ENCODE measurements at regions of chr10 and their contacts with region 1.

Region 1: GRCh38 chr10:119517235-119518141 is 25.0 kb downstream of the RGS10 start:
- DNase-seq: peak; percentile 83
- H3K4me3 Mint-ChIP-seq: peak overlapping the region; percentile 43
- H3K27ac Mint-ChIP-seq: peak overlapping the region; percentile 90
- H3K4me1 Mint-ChIP-seq: peaks cover 70% of the 10 kb centered on the region
- H3K27me3 Mint-ChIP-seq: no peaks in the 10 kb centered on the region

Region 2: DNA sequence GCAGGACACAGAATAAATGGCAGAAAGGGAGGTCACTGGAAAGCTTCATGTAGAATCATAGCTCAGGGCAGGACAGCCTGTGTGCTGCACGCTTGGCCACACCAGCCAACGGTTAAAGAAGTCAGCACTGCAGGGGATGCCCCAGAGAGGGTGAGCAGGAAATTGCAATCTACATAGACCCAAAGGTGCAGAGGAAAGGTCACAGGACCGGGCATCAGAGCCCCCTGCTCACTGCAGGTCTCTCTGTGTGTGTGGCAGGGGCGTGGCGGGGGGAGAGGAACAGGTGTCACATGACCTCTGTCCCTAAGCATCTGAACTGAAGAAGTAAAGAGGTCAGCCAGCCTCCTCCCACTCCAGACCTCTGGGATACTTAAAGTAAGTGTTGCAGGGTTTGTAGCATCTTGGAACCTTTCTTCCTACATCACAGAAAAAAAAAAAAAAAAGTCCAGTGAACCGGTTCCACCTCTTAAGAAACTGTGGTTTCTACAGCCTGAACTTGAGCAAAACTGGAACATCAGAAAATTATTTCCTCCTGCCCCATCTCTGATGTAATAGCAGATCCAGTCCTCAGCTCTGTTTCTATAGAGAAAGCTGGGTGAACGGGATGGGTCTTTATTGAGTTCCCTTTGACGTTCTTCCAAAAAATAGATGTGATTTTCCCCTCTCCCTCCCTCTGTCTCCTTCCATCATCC is 39.2 kb before region 1 on chr10:
- CTCF ChIA-PET with region 1: interaction called, 13 read pairs
- intact Hi-C with region 1: loop called (anchors 1 kb)
- DNase-seq: peak; percentile 76
- H3K4me3 Mint-ChIP-seq: peak overlapping the region; percentile 37
- H3K27ac Mint-ChIP-seq: peak overlapping the region; percentile 14
- H3K4me1 Mint-ChIP-seq: peaks cover 29% of the 10 kb centered on the region
- H3K27me3 Mint-ChIP-seq: no peaks in the 10 kb centered on the region

Region 3: GRCh38 chr10:119496273-119496672 is 21.2 kb before region 1 on chr10:
- CTCF ChIA-PET with region 1: interaction called, 10 read pairs
- intact Hi-C with region 1: no loop called
- DNase-seq: peak; percentile 79
- H3K4me3 Mint-ChIP-seq: no peak overlapping the region
- H3K27ac Mint-ChIP-seq: peak overlapping the region; percentile 62
- H3K4me1 Mint-ChIP-seq: peaks cover 85% of the 10 kb centered on the region
- H3K27me3 Mint-ChIP-seq: no peaks in the 10 kb centered on the region

Region 4: GRCh38 chr10:119502209-119502608 is 15.3 kb before region 1 on chr10:
- CTCF ChIA-PET with region 1: interaction called, 10 read pairs
- intact Hi-C with region 1: loop called (anchors 1 kb)
- DNase-seq: peak; percentile 93
- H3K4me3 Mint-ChIP-seq: peak overlapping the region; percentile 47
- H3K27ac Mint-ChIP-seq: peak overlapping the region; percentile 99
- H3K4me1 Mint-ChIP-seq: peaks cover 98% of the 10 kb centered on the region
- H3K27me3 Mint-ChIP-seq: no peaks in the 10 kb centered on the region

Region 5: DNA sequence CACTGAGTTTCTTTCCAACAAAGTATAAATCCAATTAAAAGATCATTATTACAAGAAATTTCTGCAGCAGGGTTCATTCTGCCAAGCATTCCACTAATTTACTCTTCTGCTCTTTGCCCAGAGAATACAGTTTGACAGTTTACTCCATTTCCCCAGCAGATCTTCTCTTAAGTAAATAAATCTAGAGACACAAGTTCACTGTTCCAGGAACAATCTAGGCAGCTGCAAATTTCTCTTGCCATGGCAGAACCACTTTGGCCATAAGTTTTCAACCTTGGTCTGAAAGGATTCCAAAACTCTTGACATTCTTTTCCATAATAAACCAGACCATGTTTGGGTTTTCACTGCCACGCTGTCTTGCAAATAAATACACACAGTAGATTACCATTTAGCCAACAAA is 13.6 kb after region 1 on chr10:
- CTCF ChIA-PET with region 1: interaction called, 18 read pairs
- intact Hi-C with region 1: no loop called
- DNase-seq: no peak
- H3K4me3 Mint-ChIP-seq: no peak overlapping the region
- H3K27ac Mint-ChIP-seq: no peak overlapping the region
- H3K4me1 Mint-ChIP-seq: peaks cover 81% of the 10 kb centered on the region
- H3K27me3 Mint-ChIP-seq: no peaks in the 10 kb centered on the region